CD8-positive, alpha-beta memory T cell (primary cell): ENCODE measurements at regions of chr5 and their contacts with region 1.

Region 1: DNA sequence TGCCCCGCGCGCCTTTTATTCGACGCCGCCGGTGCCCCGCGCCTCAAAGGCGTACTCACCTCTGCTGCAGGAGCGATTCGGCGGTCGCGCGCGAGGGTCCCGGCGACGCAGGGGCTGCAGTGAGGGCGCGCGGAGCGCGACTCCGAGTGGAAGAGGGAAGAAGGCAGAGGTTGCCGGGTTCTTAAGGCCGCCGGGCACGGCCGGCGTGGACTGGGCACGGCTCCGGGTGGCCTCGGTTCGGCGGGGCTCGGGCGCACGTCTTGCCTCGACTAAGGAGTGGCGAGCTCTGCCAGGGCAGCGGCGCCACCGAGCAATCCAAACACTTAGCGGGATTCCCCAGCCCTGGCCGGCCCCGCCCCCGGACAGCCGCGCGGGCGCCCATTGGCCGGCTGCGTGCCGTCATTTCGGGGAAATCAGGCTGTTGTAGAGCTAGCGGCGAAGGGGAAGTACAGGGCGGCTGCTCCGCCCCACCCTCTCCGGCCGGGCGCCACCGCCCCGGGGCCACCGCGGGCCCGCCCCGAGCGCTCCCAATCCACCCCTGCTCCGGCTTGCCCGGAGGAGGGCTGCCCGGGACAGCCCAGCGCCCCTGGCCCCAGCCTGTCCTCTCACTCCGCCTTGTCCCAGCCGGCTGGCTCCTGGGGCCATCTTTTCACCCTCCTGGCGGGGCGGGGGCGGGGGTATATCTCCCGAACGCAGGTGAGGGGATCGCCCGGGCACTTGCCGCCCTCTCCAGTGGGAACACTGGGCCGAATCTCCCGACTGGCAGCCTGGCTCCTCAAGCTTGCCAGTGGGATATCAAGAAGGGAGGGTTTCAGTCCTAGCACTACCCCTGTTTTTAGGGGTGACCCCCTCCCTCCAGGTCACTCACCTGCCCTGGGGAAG is at the start of gene IRF1:
- DNase-seq: peak; percentile 95 to 99 (median 98)
- H3K4me3 ChIP-seq: peak within 1 kb of the TSS; percentile 88
- H3K4me3 Mint-ChIP-seq: peak within 1 kb of the TSS; percentile 88 to 99 (median 96)
- H3K27ac ChIP-seq: peak within 1 kb of the TSS; percentile 96
- H3K27ac Mint-ChIP-seq: peak within 1 kb of the TSS; percentile 97 to 100 (median 98)
- H3K4me1 ChIP-seq: peaks cover 80% of the 10 kb centered on the region
- H3K4me1 Mint-ChIP-seq: peaks cover 69 to 80% (median 77%) of the 10 kb centered on the region in 3 donors
- H3K27me3 ChIP-seq: no peaks in the 10 kb centered on the region
- H3K27me3 Mint-ChIP-seq: peaks cover 0 to 13% of the 10 kb centered on the region in 2 donors
- total RNA-seq, gene IRF1: 115 to 121 TPM

Region 2: DNA sequence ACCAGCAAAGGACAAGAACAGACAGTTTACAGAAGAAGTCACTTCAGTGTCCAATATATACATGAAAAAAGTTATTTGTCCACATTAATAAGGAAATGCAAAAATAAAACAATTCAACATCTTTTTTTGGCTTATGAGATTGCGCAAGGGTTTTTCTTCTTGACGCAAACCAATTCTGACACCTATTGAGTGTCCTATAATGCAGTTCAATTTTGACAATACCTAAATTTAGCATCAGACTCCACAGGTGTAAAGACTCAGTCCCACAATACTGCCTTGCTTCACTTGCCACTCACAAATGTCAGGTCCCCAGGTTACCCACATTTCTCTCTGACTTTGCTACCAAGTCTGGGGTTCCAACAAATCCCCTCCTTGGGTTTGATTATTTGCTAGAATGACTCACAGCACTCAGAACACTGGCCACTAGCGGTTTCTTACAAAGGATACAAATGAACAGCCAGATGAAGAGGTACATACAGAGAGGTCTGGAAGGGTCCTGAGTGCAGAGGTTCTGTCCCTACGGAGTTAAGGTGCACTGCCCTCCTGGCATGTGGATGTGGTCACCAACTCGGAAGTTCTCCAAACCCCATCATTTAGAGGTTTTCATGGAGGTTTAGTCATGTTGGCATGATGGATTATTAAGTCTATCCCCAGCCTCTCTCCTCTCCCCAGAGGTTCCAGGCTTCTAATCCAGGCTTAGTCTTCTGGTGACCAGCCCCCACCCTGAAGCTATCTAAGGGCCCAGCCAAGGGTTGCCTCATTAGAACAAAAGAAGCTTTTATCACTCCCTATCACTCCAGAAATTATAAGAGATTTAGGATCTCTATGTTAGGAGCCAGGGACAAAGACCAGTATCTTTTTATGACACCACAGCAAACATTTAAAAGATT is 148.2 kb before region 1 on chr5:
- CTCF ChIA-PET with region 1: no interaction called
- POLR2A ChIA-PET with region 1: no interaction called
- DNase-seq: no peak
- H3K4me3 ChIP-seq: no peak overlapping the region
- H3K4me3 Mint-ChIP-seq: no peak overlapping the region
- H3K27ac ChIP-seq: no peak overlapping the region
- H3K27ac Mint-ChIP-seq: no peak overlapping the region
- H3K4me1 ChIP-seq: no peaks in the 10 kb centered on the region
- H3K4me1 Mint-ChIP-seq: no peaks in the 10 kb centered on the region
- H3K27me3 ChIP-seq: no peaks in the 10 kb centered on the region
- H3K27me3 Mint-ChIP-seq: no peaks in the 10 kb centered on the region

Region 3: DNA sequence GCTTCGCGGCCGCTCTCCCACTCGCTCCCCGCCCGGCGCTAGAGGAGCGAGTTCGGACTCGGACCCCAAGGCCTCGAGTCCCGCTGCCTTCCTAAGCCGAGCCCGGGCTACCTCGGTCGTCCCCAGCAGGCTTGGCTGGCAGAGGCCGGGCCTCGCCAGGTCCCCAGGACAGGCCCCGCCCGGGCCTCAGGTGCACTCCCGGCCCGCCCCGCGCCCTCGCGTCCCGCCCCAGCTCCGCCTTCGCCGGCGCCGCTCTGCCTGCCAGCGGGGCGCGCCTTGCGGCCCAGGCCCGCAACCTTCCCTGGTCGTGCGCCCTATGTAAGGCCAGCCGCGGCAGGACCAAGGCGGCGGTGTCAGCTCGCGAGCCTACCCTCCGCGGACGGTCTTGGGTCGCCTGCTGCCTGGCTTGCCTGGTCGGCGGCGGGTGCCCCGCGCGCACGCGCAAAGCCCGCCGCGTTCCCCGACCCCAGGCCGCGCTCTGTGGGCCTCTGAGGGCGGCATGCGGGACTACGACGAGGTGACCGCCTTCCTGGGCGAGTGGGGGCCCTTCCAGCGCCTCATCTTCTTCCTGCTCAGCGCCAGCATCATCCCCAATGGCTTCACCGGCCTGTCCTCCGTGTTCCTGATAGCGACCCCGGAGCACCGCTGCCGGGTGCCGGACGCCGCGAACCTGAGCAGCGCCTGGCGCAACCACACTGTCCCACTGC is 121.1 kb before region 1 on chr5 and contains the start of gene SLC22A5:
- CTCF ChIA-PET with region 1: interaction called, 5 read pairs
- POLR2A ChIA-PET with region 1: interaction called, 12 read pairs
- DNase-seq: peak; percentile 56 to 81 (median 70)
- H3K4me3 ChIP-seq: peak within 1 kb of the TSS; percentile 74
- H3K4me3 Mint-ChIP-seq: peak within 1 kb of the TSS; percentile 67 to 92 (median 83)
- H3K27ac ChIP-seq: peak within 1 kb of the TSS; percentile 69
- H3K27ac Mint-ChIP-seq: peak within 1 kb of the TSS in 7 of 8 donors; percentile 4 to 95 (median 70)
- H3K4me1 ChIP-seq: peaks cover 27% of the 10 kb centered on the region
- H3K4me1 Mint-ChIP-seq: peaks cover 17 to 30% (median 29%) of the 10 kb centered on the region in 3 donors
- H3K27me3 ChIP-seq: no peaks in the 10 kb centered on the region
- H3K27me3 Mint-ChIP-seq: no peaks in the 10 kb centered on the region
- total RNA-seq, gene SLC22A5: 5.2 to 5.9 TPM

Region 4: GRCh38 chr5:132419502-132420468 is 70.9 kb before region 1 on chr5:
- CTCF ChIA-PET with region 1: interaction called, 112 read pairs
- POLR2A ChIA-PET with region 1: interaction called, 85 read pairs
- DNase-seq: peak; percentile 42 to 77 (median 60)
- H3K4me3 ChIP-seq: no peak overlapping the region
- H3K4me3 Mint-ChIP-seq: peak overlapping the region; percentile 76 to 91 (median 78)
- H3K27ac ChIP-seq: peak overlapping the region; percentile 12
- H3K27ac Mint-ChIP-seq: peak overlapping the region; percentile 84 to 99 (median 98)
- H3K4me1 ChIP-seq: peaks cover 97% of the 10 kb centered on the region
- H3K4me1 Mint-ChIP-seq: peaks cover 90 to 98% (median 97%) of the 10 kb centered on the region in 3 donors
- H3K27me3 ChIP-seq: no peaks in the 10 kb centered on the region
- H3K27me3 Mint-ChIP-seq: no peaks in the 10 kb centered on the region

Region 5: GRCh38 chr5:132437604-132438266 is 53.0 kb before region 1 on chr5:
- CTCF ChIA-PET with region 1: interaction called, 18 read pairs
- POLR2A ChIA-PET with region 1: interaction called, 20 read pairs
- DNase-seq: peak; percentile 35 to 82 (median 48)
- H3K4me3 ChIP-seq: peak overlapping the region; percentile 55
- H3K4me3 Mint-ChIP-seq: peak overlapping the region; percentile 62 to 86 (median 74)
- H3K27ac ChIP-seq: peak overlapping the region; percentile 45
- H3K27ac Mint-ChIP-seq: peak overlapping the region; percentile 89 to 98 (median 94)
- H3K4me1 ChIP-seq: peaks cover 95% of the 10 kb centered on the region
- H3K4me1 Mint-ChIP-seq: peaks cover 88 to 99% (median 95%) of the 10 kb centered on the region in 3 donors
- H3K27me3 ChIP-seq: no peaks in the 10 kb centered on the region
- H3K27me3 Mint-ChIP-seq: no peaks in the 10 kb centered on the region

Region 6: GRCh38 chr5:132466433-132467286 is 24.1 kb before region 1 on chr5:
- CTCF ChIA-PET with region 1: interaction called, 222 read pairs
- POLR2A ChIA-PET with region 1: interaction called, 60 read pairs
- DNase-seq: peak; percentile 63 to 88 (median 78)
- H3K4me3 ChIP-seq: peak overlapping the region; percentile 57
- H3K4me3 Mint-ChIP-seq: peak overlapping the region; percentile 72 to 92 (median 82)
- H3K27ac ChIP-seq: peak overlapping the region; percentile 64
- H3K27ac Mint-ChIP-seq: peak overlapping the region; percentile 87 to 100 (median 98)
- H3K4me1 ChIP-seq: peaks cover 95% of the 10 kb centered on the region
- H3K4me1 Mint-ChIP-seq: peaks cover 98 to 100% (median 99%) of the 10 kb centered on the region in 3 donors
- H3K27me3 ChIP-seq: no peaks in the 10 kb centered on the region
- H3K27me3 Mint-ChIP-seq: no peaks in the 10 kb centered on the region

Region 7: DNA sequence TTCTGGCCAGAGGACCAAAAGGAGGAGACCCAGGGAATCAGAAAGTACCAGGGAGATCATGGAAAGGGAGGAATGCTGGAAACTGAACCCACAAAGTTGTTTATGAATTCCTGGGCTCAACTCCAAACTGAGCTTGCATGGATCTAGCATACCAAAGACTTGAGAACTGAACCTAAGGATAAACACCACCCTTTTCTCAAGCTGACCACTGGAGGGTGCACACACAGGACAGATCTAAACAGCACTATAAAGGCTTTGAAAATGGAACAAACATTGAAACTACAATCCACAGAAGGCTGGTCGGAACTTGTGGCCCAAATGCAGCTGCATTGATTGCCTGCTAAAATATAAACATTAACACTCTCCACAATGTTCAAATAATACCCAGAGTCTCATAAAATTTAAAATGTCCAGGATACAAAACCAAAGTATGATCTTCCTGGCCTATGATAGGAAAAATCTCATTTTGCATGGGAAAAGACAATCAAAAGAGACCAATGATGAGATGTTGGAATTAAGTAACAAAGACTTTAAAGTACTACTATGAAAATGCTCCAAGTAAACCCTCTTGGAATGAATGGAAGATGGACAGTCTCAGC is 15.5 kb after region 1 on chr5:
- CTCF ChIA-PET with region 1: interaction called, 59 read pairs
- POLR2A ChIA-PET with region 1: interaction called, 26 read pairs
- DNase-seq: no peak
- H3K4me3 ChIP-seq: no peak overlapping the region
- H3K4me3 Mint-ChIP-seq: no peak overlapping the region
- H3K27ac ChIP-seq: no peak overlapping the region
- H3K27ac Mint-ChIP-seq: no peak overlapping the region
- H3K4me1 ChIP-seq: peaks cover 3% of the 10 kb centered on the region
- H3K4me1 Mint-ChIP-seq: peaks cover 2 to 3% (median 2%) of the 10 kb centered on the region in 3 donors
- H3K27me3 ChIP-seq: peaks cover 4% of the 10 kb centered on the region
- H3K27me3 Mint-ChIP-seq: peaks cover 11 to 29% of the 10 kb centered on the region in 2 donors

Region 8: DNA sequence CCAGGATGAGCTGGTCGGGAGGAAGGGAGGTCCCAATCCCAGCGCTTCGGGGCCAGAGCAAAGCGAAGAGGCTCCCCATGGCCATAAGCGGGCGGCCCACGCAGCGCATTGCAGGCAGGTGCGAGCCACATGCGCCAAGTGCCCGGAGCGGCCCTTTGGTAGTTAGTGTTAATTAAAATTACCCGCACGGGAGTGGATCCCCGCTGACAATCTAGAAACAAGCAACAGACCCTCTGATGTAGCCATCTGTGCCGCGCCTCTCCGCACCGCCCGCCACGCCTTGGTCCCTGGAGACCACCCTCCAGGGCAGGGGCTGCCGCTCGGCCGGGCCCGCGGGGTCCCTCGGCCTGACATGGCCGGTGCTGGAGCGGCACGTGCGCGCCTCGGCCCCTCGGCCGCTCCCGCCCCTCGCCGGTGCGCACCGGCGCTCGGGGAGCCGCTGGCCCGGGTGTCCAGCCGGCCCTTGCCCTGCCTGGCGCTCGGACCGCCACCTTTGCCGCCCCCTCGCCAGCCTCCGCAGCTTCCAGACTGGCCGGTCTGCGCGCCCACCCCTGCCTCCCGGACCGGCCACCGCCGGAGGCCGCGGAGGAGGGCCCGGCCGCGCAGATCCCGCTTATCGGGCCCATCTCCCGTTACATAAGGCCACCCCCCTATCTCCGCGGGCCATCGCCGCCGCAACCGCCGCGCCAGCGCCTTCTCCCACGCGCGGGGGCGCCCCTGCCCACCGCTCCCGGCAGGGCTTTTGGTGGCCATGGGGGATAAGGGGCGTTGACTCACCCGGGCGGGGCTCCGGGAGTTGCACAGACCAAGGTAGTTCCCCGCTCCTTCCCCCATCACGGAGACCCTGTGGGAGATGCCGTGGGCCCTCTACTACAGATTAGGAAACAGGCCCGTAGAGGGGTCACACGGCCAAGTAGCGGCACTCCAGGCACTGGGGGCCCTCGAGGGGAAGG is 165.4 kb after region 1 on chr5:
- CTCF ChIA-PET with region 1: no interaction called
- POLR2A ChIA-PET with region 1: no interaction called
- DNase-seq: peak in 3 of 5 donors; percentile 18 to 30 (median 26)
- H3K4me3 ChIP-seq: no peak overlapping the region
- H3K4me3 Mint-ChIP-seq: peak overlapping the region; percentile 43 to 80 (median 62)
- H3K27ac ChIP-seq: no peak overlapping the region
- H3K27ac Mint-ChIP-seq: peak overlapping the region in 3 of 8 donors; percentile 13 to 66 (median 24)
- H3K4me1 ChIP-seq: peaks cover 9% of the 10 kb centered on the region
- H3K4me1 Mint-ChIP-seq: peaks cover 6 to 21% (median 13%) of the 10 kb centered on the region in 3 donors
- H3K27me3 ChIP-seq: peaks cover 21% of the 10 kb centered on the region
- H3K27me3 Mint-ChIP-seq: peaks cover 20 to 43% of the 10 kb centered on the region in 2 donors

Region 9: DNA sequence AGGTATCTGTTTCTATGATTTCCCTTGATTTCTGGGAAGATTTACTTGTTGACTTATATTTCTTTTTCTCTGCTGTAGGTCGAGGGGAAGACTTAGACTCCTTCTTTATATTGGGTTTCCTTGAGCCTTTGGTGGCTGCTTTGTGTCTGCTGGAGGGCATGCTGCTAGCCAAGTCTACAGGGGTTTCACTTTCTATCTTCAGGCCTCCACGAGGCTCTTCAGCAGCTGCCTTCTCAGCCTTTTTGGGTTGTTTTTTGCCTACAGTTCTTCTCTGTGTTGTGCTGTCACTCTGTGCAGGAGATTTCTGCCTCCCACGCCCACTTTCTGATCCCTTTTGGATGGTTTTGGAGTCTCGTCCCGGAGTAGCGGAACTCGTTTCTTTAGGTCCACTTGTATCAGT is 406.0 kb after region 1 on chr5:
- CTCF ChIA-PET with region 1: no interaction called
- POLR2A ChIA-PET with region 1: no interaction called
- DNase-seq: no peak
- H3K4me3 ChIP-seq: no peak overlapping the region
- H3K4me3 Mint-ChIP-seq: no peak overlapping the region
- H3K27ac ChIP-seq: no peak overlapping the region
- H3K27ac Mint-ChIP-seq: peak overlapping the region in 4 of 8 donors; percentile 39 to 88 (median 70)
- H3K4me1 ChIP-seq: no peaks in the 10 kb centered on the region
- H3K4me1 Mint-ChIP-seq: peaks cover 0 to 20% (median 2%) of the 10 kb centered on the region in 3 donors
- H3K27me3 ChIP-seq: no peaks in the 10 kb centered on the region
- H3K27me3 Mint-ChIP-seq: no peaks in the 10 kb centered on the region